Activated CD4-positive, alpha-beta T cell treated with anti-CD3 and anti-CD28 coated beads for 36 hours (primary cell): ENCODE measurements at regions of chr5 and their contacts with region 1.

Region 1: GRCh38 chr5:61055434-61056006 is 106.7 kb downstream of the SMIM15 start:
- DNase-seq: no peak
- ATAC-seq: peak; percentile 49
- H3K4me3 Mint-ChIP-seq: no peak overlapping the region
- H3K27ac Mint-ChIP-seq: no peak overlapping the region
- H3K4me1 Mint-ChIP-seq: peaks cover 4% of the 10 kb centered on the region
- H3K27me3 Mint-ChIP-seq: no peaks in the 10 kb centered on the region

Region 2: DNA sequence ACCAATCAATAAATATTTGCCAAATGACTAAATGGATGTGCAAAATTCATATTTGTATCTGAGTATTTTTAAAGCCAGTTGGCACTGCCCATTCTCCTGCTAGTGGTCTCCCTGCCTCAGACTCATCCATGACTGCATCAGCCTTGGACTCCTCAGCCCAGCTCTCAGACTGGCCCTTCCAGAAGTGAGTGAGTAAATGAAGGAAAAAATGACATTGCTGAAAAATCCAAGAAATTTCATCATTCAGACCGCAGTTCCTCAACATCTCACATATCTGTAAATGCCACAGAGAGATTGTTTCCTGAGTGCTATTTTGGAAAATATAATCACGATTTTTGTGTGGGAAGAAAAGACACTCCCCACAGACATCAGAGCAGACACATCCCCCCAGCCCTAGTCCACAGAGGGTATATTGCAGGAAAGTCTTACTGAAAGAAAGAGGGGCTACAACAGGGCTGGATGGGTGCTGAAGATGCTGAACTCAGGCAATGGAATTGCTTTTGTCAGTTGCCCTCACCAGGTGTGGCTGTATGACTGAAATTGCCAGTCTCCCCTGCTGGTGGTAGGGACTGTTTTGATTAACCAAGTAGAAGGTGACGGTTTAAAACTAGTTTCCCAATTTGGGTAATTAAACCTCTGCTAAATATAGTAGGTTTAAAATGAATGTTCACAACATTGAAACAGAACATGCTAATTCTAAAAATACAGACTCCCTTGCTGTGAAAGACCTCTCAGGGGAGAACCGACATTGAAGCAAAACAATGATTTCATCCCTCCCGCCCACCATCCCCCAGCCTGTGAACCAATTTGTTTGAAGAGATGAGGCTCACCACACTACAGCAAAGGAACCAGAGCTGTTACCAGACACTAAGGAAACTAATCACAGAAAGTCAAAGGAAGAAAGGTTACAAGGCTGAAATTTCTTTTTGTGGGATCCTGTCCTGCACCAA is 514.4 kb before region 1 on chr5:
- CTCF ChIA-PET with region 1: no interaction called
- POLR2A ChIA-PET with region 1: no interaction called
- intact Hi-C with region 1: no loop called
- DNase-seq: peak; percentile 25
- ATAC-seq: peak; percentile 23
- H3K4me3 Mint-ChIP-seq: no peak overlapping the region
- H3K27ac Mint-ChIP-seq: no peak overlapping the region
- H3K4me1 Mint-ChIP-seq: peaks cover 5% of the 10 kb centered on the region
- H3K27me3 Mint-ChIP-seq: peaks cover 4% of the 10 kb centered on the region

Region 3: DNA sequence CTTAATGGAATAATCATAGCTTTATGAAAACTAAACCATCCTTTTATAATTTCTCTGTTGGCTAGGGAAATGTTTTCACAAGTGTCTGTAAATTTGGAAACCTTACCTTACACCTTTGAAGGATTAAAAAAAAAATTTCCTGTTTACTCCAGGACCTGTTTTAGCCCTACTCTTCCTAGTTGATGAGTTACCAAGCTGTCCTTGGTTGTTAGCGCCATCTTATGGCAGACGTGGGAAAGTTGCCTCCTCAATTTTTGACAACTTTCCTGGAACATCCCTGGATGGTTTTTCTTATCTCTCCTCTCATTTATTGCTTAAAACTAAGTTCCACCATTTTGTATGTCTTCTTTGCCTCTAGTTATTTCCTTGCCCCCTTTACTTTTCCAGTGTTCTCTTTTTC is 302.2 kb after region 1 on chr5:
- CTCF ChIA-PET with region 1: no interaction called
- POLR2A ChIA-PET with region 1: no interaction called
- intact Hi-C with region 1: loop called in 1 of 2 experiments (anchors 5 kb)
- DNase-seq: peak; percentile 50
- ATAC-seq: no peak
- H3K4me3 Mint-ChIP-seq: no peak overlapping the region
- H3K27ac Mint-ChIP-seq: no peak overlapping the region
- H3K4me1 Mint-ChIP-seq: peaks cover 29% of the 10 kb centered on the region
- H3K27me3 Mint-ChIP-seq: no peaks in the 10 kb centered on the region